PC-9 (cell line): ENCODE measurements at regions of chr13 and their contacts with region 1.

Region 1: GRCh38 chr13:20495082-20496023 is 30.3 kb downstream of the CRYL1 start:
- DNase-seq: peak; percentile 41 to 69
- H3K4me3 ChIP-seq: no peak overlapping the region
- H3K27ac ChIP-seq: no peak overlapping the region
- H3K4me1 ChIP-seq: no peaks in the 10 kb centered on the region
- H3K27me3 ChIP-seq: no peaks in the 10 kb centered on the region
- CTCF ChIP-seq: peak; percentile 97

Region 2: GRCh38 chr13:20465218-20465879 is 30.0 kb before region 1 on chr13:
- CTCF ChIA-PET with region 1: no interaction called
- POLR2A ChIA-PET with region 1: no interaction called
- intact Hi-C with region 1: no loop called
- DNase-seq: peak; percentile 36 to 48
- H3K4me3 ChIP-seq: no peak overlapping the region
- H3K27ac ChIP-seq: no peak overlapping the region
- H3K4me1 ChIP-seq: peaks cover 24% of the 10 kb centered on the region
- H3K27me3 ChIP-seq: no peaks in the 10 kb centered on the region
- CTCF ChIP-seq: no peak

Region 3: DNA sequence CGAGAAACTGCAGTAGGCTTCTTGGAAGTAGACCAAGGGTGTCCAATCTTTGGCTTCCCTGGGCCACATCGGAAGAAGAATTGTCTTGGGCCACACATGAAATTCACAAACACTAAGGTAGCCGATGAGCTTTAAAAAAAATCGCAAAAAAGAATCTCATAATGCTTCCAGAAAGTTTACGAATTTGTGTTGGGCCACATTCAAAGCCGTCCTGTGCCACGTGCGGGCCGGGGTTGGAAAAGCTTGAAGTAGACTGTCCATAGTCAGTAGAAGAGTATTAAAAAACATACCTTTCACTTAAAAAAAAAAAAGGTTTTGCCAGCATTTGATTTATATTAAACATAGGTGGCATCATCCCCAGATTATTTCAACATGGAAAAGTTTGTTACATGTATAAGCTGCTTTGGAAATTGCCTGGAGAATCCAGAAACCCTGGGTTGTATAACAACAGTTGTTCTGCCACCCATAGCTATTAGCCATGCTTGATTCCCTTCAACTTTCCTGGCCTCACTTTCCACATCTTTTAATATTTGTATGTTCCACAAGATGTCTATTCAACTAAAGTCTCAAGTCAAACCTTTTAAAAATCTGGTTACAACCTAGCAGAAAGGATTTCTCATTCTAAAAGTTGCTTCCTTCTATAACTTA is 72.7 kb after region 1 on chr13:
- CTCF ChIA-PET with region 1: no interaction called
- POLR2A ChIA-PET with region 1: no interaction called
- intact Hi-C with region 1: no loop called
- DNase-seq: no peak
- H3K4me3 ChIP-seq: peak overlapping the region; percentile 66
- H3K27ac ChIP-seq: peak overlapping the region; percentile 83
- H3K4me1 ChIP-seq: peaks cover 12% of the 10 kb centered on the region
- H3K27me3 ChIP-seq: no peaks in the 10 kb centered on the region
- CTCF ChIP-seq: no peak

Region 4: DNA sequence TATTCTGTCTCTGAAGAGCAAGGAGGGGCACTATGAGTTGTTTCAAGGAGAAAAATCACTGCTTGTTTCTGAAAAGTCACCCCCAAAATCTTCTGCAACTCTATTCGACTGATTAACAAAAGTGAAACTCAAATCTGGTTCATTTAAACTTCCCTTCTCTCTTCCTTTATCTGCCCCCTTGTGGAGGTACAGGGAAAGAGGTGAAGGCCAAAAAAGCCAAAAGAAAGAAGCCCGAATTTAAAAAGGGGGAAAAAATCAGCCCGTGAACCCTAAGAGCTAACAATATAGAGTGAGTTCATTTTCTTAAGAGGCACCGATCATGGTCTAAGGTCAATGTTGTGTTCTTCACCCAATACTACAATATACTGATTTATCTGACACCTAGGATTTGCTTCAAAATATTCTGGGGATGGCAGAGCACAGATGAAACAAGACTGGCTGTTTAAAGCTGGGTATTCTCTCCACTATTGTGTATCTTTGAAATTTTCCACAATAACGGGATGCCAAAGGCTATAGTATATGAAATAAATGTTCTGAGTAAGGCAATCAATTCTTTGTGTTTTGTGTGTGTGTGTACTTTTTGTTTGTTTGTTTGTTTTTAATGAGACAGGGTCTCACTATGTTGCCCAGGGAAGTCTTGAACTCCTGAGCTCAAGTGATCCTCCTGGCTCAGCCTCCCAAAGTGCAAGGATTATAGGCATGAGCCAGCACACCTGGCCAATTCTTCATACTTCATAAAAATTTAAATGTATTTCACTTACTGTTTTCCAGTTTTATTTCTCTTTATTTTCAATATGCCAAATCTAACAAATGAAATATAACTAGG is 333.4 kb after region 1 on chr13:
- CTCF ChIA-PET with region 1: interaction called, 5 read pairs
- POLR2A ChIA-PET with region 1: no interaction called
- intact Hi-C with region 1: loop called (anchors 1 kb)
- DNase-seq: peak in 1 of 2 experiments; percentile 12
- H3K4me3 ChIP-seq: peak overlapping the region; percentile 32; the same call in 1 of the 2 replicates
- H3K27ac ChIP-seq: 0 out of 2 replicates have a peak overlapping the region, but pooled peaks have one; percentile 4
- H3K4me1 ChIP-seq: no peaks in the 10 kb centered on the region
- H3K27me3 ChIP-seq: no peaks in the 10 kb centered on the region
- CTCF ChIP-seq: peak; percentile 88

Region 5: DNA sequence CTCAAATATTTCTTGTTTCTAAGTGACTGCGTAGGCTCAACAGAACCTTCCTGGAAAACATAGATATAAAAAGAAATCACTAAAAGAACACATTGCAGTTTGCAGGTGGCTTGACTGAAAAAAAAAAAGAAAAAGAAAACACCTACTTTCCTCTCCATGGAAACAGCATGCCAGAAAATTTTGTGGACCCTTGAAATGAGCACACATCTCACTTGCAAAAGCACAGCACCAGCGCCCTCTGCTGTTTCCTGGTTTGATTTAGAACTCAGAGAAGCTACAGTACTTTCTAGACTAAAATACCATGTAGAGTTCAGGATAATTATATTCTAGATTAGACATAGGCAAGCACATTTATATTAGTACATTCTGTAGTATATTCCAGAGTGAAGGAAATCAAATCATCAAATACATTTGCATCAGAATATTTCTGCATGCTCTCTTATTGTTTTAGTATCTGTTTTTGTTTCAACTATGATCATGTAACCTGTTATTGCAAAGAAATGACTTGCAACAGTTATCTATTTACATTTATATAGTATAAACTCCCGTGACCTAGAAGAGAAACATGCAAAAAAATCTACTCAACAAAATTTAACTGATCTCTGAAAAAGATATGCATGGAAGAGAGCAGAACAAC is 429.5 kb after region 1 on chr13:
- CTCF ChIA-PET with region 1: no interaction called
- POLR2A ChIA-PET with region 1: no interaction called
- intact Hi-C with region 1: loop called (anchors 1 kb)
- DNase-seq: peak; percentile 48 to 54
- H3K4me3 ChIP-seq: no peak overlapping the region
- H3K27ac ChIP-seq: no peak overlapping the region
- H3K4me1 ChIP-seq: no peaks in the 10 kb centered on the region
- H3K27me3 ChIP-seq: no peaks in the 10 kb centered on the region
- CTCF ChIP-seq: peak; percentile 83

Region 6: GRCh38 chr13:21010621-21011020 is 515.3 kb after region 1 on chr13:
- CTCF ChIA-PET with region 1: no interaction called
- POLR2A ChIA-PET with region 1: no interaction called
- intact Hi-C with region 1: no loop called
- DNase-seq: no peak
- H3K4me3 ChIP-seq: no peak overlapping the region
- H3K27ac ChIP-seq: no peak overlapping the region
- H3K4me1 ChIP-seq: peaks cover 12% of the 10 kb centered on the region
- H3K27me3 ChIP-seq: no peaks in the 10 kb centered on the region
- CTCF ChIP-seq: no peak

Region 7: DNA sequence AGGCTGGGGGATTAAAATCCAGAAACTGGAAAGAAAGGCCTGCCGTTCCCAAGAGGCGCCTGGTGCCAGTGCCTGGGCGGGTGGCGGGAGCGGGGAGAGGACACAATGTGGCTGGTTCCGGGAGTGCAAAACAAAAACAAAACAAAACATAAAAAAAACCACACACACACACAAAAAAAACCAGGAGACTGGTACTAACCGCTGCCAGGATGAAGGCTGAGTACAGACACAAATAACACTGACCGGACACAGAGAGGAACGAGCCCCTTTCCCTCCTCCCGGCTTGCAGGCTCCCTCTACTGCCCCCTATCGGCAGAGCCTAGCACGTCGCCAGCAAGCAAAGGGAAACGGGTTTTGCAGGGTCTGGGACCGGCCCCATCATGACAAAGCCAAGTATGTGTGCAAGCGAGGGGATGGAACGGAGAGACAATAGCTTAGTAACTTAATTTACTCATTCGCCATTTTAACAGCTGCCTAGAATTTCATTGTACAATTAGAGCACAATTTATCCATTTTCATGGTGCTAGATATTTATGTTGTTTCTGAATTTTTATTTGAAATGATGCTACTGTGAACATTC is 981.6 kb after region 1 on chr13:
- CTCF ChIA-PET with region 1: no interaction called
- POLR2A ChIA-PET with region 1: no interaction called
- intact Hi-C with region 1: loop called (anchors 5 kb)
- DNase-seq: peak; percentile 64 to 69
- H3K4me3 ChIP-seq: no peak overlapping the region
- H3K27ac ChIP-seq: no peak overlapping the region
- H3K4me1 ChIP-seq: peaks cover 29% of the 10 kb centered on the region
- H3K27me3 ChIP-seq: no peaks in the 10 kb centered on the region
- CTCF ChIP-seq: peak; percentile 91